ACHN (cell line): ENCODE measurements at regions of chr12 and their contacts with region 1.

Region 1: GRCh38 chr12:43776498-43776897 is 17.7 kb downstream of the IRAK4 start:
- DNase-seq: peak; percentile 62

Region 2: DNA sequence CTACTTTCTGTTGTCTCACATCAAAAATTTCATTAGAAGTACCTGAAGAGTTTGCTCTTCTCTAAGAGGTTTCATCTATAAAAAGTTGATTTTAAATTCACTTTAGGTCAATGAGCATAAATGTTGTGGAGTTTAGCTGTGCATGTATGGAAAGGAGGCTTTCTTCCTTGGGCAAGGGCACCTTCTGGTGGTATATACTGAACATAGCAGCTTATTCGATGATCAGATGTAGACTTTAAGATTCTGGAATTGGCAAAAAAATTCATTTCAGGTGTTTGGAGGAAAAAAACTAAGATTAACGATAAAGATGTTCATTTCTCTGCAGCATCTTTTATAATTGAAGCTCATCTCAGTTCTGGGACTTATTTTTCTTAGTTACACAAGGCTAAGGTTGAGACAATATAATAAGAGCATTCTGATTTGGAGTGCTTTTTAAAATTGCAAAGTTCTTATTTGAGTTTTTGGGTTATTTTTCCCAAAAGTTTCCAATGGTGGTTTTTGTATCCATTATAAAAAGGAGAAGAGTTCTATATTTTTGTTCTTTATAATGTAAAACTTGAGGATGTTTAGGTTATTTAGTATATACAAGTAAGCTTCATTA is 106.2 kb after region 1 on chr12:
- in situ Hi-C with region 1: loop called (anchors 10 kb)
- DNase-seq: peak; percentile 76